CD4-positive, alpha-beta memory T cell (primary cell): ENCODE measurements at regions of chr10 and their contacts with region 1.

Region 1: DNA sequence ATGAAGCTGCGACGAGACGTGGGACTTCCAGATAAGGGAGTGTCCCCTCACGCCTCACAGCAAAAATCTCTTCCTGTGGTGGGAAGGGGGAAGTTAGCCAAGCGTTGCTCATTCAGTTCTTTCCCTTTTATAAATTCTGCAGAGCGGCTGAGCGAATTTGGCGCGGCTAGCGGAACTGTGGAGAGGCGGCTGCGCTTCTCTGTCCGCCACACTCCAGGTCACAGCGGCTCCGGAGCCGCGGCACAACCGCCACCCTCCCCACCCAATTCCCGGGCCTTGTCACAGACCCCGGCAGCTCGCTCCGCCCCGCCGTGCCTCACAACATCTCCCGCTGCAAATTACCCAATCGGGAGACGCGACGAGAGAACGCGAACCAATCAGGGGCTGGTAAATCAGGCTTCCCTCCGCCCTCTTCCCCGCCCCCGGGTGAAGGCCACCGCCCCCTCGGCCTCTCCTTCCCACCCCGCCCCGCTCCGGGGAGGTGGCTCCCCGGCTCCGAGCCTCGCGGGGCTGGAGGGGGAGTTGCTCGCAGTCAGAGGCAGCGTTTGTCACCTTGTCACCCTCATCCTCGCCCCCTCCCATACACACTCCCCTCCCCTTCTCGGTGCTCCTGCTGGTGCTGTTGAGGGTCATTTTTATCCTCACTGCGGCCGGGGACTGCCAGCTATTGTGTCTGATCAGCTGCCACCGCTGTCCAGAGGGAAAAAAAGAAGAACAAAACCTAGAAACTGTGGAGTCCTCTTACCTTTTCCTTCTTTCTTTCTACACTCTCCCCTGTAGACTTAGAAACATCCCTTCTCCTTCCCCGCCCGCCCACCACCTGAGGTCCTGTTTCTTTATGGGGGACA is 918 bp upstream of the ARHGAP21 start:
- DNase-seq: peak; percentile 91 to 95 (median 94)
- H3K4me3 ChIP-seq: peak overlapping the region; percentile 88 to 90
- H3K4me3 Mint-ChIP-seq: peak overlapping the region; percentile 93 to 95 (median 95)
- H3K27ac ChIP-seq: peak overlapping the region; percentile 71
- H3K27ac Mint-ChIP-seq: peak overlapping the region; percentile 89 to 94 (median 92)
- H3K4me1 ChIP-seq: peaks cover 24% of the 10 kb centered on the region
- H3K4me1 Mint-ChIP-seq: peaks cover 5 to 25% (median 16%) of the 10 kb centered on the region in 4 donors
- H3K27me3 ChIP-seq: no peaks in the 10 kb centered on the region
- H3K27me3 Mint-ChIP-seq: no peaks in the 10 kb centered on the region

Region 2: GRCh38 chr10:24617771-24618391 is 106.7 kb before region 1 on chr10:
- CTCF ChIA-PET with region 1: interaction called, 3 read pairs
- POLR2A ChIA-PET with region 1: interaction called, 46 read pairs
- intact Hi-C with region 1: no loop called
- DNase-seq: peak; percentile 32 to 47 (median 39)
- H3K4me3 ChIP-seq: no peak overlapping the region
- H3K4me3 Mint-ChIP-seq: no peak overlapping the region
- H3K27ac ChIP-seq: no peak overlapping the region
- H3K27ac Mint-ChIP-seq: peak overlapping the region in 2 of 7 donors; percentile 5 to 47
- H3K4me1 ChIP-seq: peaks cover 13% of the 10 kb centered on the region
- H3K4me1 Mint-ChIP-seq: peaks cover 16 to 31% (median 23%) of the 10 kb centered on the region in 4 donors
- H3K27me3 ChIP-seq: no peaks in the 10 kb centered on the region
- H3K27me3 Mint-ChIP-seq: no peaks in the 10 kb centered on the region

Region 3: DNA sequence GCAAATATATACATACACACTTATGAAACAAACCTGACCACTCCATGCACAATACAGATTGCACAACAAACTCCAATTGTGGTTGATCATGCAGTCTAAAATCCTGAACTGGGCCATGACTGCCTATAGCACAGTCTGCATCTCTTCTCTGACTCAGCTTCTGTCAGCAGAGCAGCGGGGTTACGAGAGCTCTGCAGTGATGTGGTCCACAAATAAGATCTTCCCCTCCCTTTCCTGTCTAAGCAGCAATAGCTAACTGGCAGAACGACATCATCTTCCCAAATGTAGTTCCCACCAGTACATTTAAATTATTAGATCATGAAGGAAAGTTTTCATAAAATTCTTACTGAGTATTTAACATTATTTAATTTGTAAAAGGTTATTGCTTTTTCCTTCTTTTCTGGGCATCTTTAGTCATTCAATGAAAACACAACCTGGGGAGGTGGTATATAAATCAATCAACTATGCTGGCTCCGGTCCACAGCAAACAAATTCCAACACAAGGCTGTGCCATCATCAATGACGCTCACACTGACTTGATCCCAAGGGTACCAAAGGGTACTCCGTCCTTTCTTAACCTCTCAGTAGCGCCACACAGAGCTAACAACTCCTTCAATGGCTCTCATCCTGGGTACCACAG is 18.0 kb before region 1 on chr10:
- CTCF ChIA-PET with region 1: no interaction called
- POLR2A ChIA-PET with region 1: interaction called, 17 read pairs
- intact Hi-C with region 1: no loop called
- DNase-seq: peak in 3 of 5 donors; percentile 13 to 22 (median 13)
- H3K4me3 ChIP-seq: no peak overlapping the region
- H3K4me3 Mint-ChIP-seq: no peak overlapping the region
- H3K27ac ChIP-seq: no peak overlapping the region
- H3K27ac Mint-ChIP-seq: no peak overlapping the region
- H3K4me1 ChIP-seq: peaks cover 13% of the 10 kb centered on the region
- H3K4me1 Mint-ChIP-seq: peaks cover 3 to 10% (median 8%) of the 10 kb centered on the region in 4 donors
- H3K27me3 ChIP-seq: no peaks in the 10 kb centered on the region
- H3K27me3 Mint-ChIP-seq: no peaks in the 10 kb centered on the region

Region 4: GRCh38 chr10:24894309-24894708 is 169.7 kb after region 1 on chr10:
- CTCF ChIA-PET with region 1: interaction called, 3 read pairs
- POLR2A ChIA-PET with region 1: interaction called, 4 read pairs
- intact Hi-C with region 1: loop called (anchors 2 kb)
- DNase-seq: no peak
- H3K4me3 ChIP-seq: peak overlapping the region in 1 of 2 donors; percentile 40
- H3K4me3 Mint-ChIP-seq: peak overlapping the region; percentile 72 to 94 (median 86)
- H3K27ac ChIP-seq: peak overlapping the region; percentile 35
- H3K27ac Mint-ChIP-seq: peak overlapping the region; percentile 95 to 98 (median 96)
- H3K4me1 ChIP-seq: peaks cover 66% of the 10 kb centered on the region
- H3K4me1 Mint-ChIP-seq: peaks cover 33 to 88% (median 56%) of the 10 kb centered on the region in 4 donors
- H3K27me3 ChIP-seq: no peaks in the 10 kb centered on the region
- H3K27me3 Mint-ChIP-seq: no peaks in the 10 kb centered on the region

Region 5: DNA sequence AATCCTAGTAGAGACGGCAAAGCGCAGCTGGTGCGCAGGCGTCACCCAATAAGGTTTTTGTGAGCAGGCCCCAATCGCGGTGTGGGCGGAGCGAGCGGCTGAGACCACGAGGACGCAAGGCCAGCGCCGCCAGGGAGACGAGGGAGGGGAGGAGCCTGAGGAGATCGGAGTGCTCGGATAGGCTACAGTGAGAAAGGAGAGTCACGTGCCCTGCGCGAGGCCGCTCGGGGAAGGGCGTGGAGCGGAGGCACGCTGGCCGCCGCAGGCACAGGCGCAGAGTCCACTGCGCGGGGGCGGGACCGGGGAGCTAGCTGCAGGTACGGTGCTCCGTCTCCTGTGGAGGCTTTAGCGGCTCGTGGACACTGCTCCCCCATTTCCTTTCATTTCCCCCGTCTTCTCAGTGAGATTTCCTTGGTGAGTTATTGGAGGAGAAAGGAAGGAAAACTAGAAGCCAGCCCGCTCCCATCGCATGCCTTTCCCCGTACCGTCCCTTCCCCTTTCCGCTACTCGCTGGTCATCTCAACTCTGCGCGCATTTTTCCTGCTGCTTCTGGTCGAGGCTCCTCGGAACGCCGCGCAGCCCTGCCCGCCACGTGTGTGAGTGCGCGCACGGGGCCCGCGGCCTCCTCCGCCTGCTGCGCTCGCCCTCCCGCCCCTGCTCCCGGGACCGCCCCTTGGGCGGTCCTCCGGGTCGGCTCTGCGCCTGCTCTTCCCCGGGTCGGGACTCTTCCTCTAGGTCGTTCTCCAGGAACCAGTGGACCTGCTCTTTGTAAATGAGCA is 292.0 kb after region 1 on chr10 and contains the start of gene THNSL1:
- CTCF ChIA-PET with region 1: no interaction called
- POLR2A ChIA-PET with region 1: interaction called, 27 read pairs
- intact Hi-C with region 1: loop called (anchors 1 kb)
- DNase-seq: peak; percentile 95 to 99 (median 97)
- H3K4me3 ChIP-seq: peak within 1 kb of the TSS; percentile 30 to 76
- H3K4me3 Mint-ChIP-seq: peak within 1 kb of the TSS; percentile 88 to 97 (median 93)
- H3K27ac ChIP-seq: peak within 1 kb of the TSS; percentile 85
- H3K27ac Mint-ChIP-seq: peak within 1 kb of the TSS; percentile 96 to 99 (median 98)
- H3K4me1 ChIP-seq: peaks cover 22% of the 10 kb centered on the region
- H3K4me1 Mint-ChIP-seq: peaks cover 9 to 25% (median 17%) of the 10 kb centered on the region in 4 donors
- H3K27me3 ChIP-seq: no peaks in the 10 kb centered on the region
- H3K27me3 Mint-ChIP-seq: no peaks in the 10 kb centered on the region
- total RNA-seq, gene THNSL1: 6.7 to 7.5 TPM